RWPE1 (cell line): ENCODE measurements at regions of chr11 and their contacts with region 1.

Region 1: DNA sequence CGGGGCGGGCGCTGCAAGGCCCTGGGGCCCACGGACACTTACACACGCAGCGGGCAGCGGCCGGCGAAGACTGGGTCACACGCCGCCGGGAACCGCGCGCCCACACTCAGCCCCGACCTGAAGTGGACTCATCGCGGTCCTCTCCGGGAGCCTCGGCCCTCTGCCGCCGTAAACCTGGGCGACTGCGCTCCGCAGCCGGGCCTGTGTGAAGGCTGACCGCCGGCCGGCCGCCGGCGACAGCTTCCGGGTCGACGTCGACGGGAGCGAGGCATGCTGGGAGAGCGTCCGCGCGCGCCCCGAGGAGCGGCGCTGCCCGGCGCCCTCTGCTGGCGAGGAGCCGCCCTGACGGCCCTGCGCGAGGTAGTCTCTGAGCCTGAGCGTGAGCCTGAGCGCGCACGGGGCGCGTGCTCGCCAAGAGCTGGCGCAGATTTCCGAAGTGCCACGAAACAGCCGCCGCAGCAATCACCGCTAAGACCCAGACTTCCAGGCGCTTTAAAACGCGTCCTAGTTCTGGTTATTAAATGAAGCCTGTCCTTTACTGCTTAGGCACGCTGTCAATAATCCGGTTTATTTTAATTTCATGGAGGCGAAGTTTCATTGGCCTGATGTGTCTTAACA is at the start of gene SNX19:
- DNase-seq: peak; percentile 87
- H3K27ac ChIP-seq: peak within 1 kb of the TSS; percentile 57
- CTCF ChIP-seq: peak; percentile 97

Region 2: GRCh38 chr11:130979386-130979972 is 63.1 kb after region 1 on chr11:
- CTCF ChIA-PET with region 1: interaction called, 15 read pairs
- POLR2A ChIA-PET with region 1: no interaction called
- DNase-seq: peak; percentile 31
- H3K27ac ChIP-seq: no peak overlapping the region
- CTCF ChIP-seq: peak; percentile 32